ENCODE measurements at regions of chr2 and their contacts with region 1.

Region 1: DNA sequence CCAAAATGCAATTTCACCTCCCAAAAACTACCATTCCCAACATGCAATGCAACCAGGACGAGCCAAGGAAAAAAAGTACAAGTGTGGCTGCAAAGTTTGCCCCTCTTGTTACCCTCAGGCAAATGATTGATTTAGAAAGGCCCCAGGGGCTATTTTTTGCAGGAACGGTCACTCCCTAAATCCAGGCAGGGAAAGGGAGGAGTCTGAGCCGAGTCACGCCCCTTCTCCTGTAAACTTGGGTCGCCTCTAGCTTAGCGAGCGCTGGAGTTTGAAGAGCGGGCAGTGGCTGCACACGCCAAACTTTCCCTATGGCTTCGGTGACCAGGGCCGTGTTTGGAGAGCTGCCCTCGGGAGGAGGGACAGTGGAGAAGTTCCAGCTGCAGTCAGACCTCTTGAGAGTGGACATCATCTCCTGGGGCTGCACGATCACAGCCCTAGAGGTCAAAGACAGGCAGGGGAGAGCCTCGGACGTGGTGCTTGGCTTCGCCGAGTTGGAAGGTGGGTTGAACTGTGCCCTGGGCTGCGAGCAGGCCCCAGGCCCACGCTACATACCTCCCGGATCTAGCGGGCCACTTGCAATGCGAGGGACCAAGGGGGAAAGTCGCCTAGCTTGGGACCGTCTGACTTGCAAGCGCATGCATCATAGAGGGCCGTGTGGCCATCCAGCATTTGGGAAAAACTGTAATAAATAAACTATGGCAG is at the start of gene GALM:
- DNase-seq: peak; percentile 69
- H3K4me3 ChIP-seq: peak within 1 kb of the TSS; percentile 41
- H3K27me3 ChIP-seq: no peaks in the 10 kb centered on the region
- CTCF ChIP-seq: no peak
- polyA plus RNA-seq, gene GALM: 9.6 and 10.1 TPM in 2 replicates

Region 2: GRCh38 chr2:38690499-38691294 is 24.7 kb after region 1 on chr2:
- CTCF ChIA-PET with region 1: interaction called, 4 read pairs
- POLR2A ChIA-PET with region 1: interaction called, 13 read pairs
- DNase-seq: peak; percentile 85
- H3K4me3 ChIP-seq: no peak overlapping the region
- H3K27me3 ChIP-seq: no peaks in the 10 kb centered on the region
- CTCF ChIP-seq: no peak

Measured in BJ (cell line).